Activated B cell treated with CpG ODN at 0.5 μM for 24 hours (primary cell): ENCODE measurements at regions of chr16 and their contacts with region 1.

Region 1: DNA sequence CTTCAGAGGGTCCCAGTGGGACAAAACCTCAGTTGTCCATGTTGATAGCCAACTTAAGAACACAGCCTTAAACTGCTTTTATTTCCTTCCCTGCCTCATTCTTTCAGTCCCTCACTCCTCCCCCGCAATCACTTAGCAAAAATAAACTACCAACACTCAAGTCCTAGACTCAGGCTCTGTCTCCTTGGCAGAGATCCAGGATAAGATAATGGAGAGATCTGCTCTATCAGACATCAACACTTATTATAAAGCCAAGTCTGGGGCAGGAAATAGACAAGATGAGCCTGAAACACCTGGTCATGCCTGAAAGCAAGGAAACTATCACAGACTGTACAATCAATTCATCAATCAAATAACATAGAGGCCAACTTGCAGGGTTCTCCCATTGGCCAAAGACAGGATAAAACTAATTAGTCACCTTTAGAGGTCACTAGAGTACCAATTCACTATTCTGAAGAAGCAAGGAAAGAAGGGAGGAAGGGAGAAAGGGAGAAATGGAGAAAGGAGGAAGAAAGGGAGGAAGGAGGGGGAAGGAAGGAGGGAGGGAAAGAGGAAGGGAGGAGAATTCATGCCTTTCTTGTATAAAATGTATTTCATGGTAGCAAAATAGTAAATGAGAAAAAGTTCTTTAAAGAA is 15.7 kb downstream of the HYDIN start:
- DNase-seq: no peak
- ATAC-seq: no peak
- H3K4me3 Mint-ChIP-seq: no peak overlapping the region
- H3K27ac Mint-ChIP-seq: no peak overlapping the region
- H3K4me1 Mint-ChIP-seq: no peaks in the 10 kb centered on the region
- H3K27me3 Mint-ChIP-seq: peaks cover 11% of the 10 kb centered on the region
- CTCF ChIP-seq: no peak

Region 2: GRCh38 chr16:71358464-71358998 is 143.7 kb after region 1 on chr16 and contains the start of gene CALB2:
- CTCF ChIA-PET with region 1: no interaction called
- POLR2A ChIA-PET with region 1: no interaction called
- intact Hi-C with region 1: loop called (anchors 1 kb)
- DNase-seq: peak; percentile 68
- ATAC-seq: peak; percentile 90
- H3K4me3 Mint-ChIP-seq: no peak within 1 kb of the TSS
- H3K27ac Mint-ChIP-seq: no peak within 1 kb of the TSS
- H3K4me1 Mint-ChIP-seq: peaks cover 3% of the 10 kb centered on the region
- H3K27me3 Mint-ChIP-seq: peaks cover 26% of the 10 kb centered on the region
- CTCF ChIP-seq: peak; percentile 52
- total RNA-seq, gene CALB2: not detected in 2 replicates